ENCODE measurements at regions of chr6 and their contacts with region 1.

Region 1: GRCh38 chr6:24933868-24934401 is 1.8 kb downstream of the RIPOR2 start:
- DNase-seq: peak; percentile 63 to 74 (median 68)
- H3K4me3 ChIP-seq: peak overlapping the region; percentile 96 to 100
- H3K4me3 Mint-ChIP-seq: peak overlapping the region; percentile 96 to 100 (median 99)
- H3K27ac ChIP-seq: peak overlapping the region; percentile 78
- H3K27ac Mint-ChIP-seq: peak overlapping the region; percentile 87 to 96 (median 94)
- H3K4me1 ChIP-seq: peaks cover 55% of the 10 kb centered on the region
- H3K4me1 Mint-ChIP-seq: peaks cover 39 to 68% (median 51%) of the 10 kb centered on the region in 4 donors
- H3K27me3 ChIP-seq: no peaks in the 10 kb centered on the region
- H3K27me3 Mint-ChIP-seq: no peaks in the 10 kb centered on the region

Region 2: GRCh38 chr6:24720604-24721460 is 213.1 kb before region 1 on chr6:
- CTCF ChIA-PET with region 1: interaction called, 3 read pairs
- POLR2A ChIA-PET with region 1: no interaction called
- intact Hi-C with region 1: loop called (anchors 2 kb)
- DNase-seq: peak; percentile 100
- H3K4me3 ChIP-seq: peak overlapping the region; percentile 68 to 95
- H3K4me3 Mint-ChIP-seq: peak overlapping the region; percentile 91 to 100 (median 97)
- H3K27ac ChIP-seq: peak overlapping the region; percentile 100
- H3K27ac Mint-ChIP-seq: peak overlapping the region; percentile 90 to 100 (median 99)
- H3K4me1 ChIP-seq: peaks cover 38% of the 10 kb centered on the region
- H3K4me1 Mint-ChIP-seq: peaks cover 33 to 56% (median 40%) of the 10 kb centered on the region in 4 donors
- H3K27me3 ChIP-seq: no peaks in the 10 kb centered on the region
- H3K27me3 Mint-ChIP-seq: no peaks in the 10 kb centered on the region

Region 3: GRCh38 chr6:24891004-24891403 is 42.9 kb before region 1 on chr6:
- CTCF ChIA-PET with region 1: interaction called, 6 read pairs
- POLR2A ChIA-PET with region 1: interaction called, 14 read pairs
- intact Hi-C with region 1: no loop called
- DNase-seq: no peak
- H3K4me3 ChIP-seq: no peak overlapping the region
- H3K4me3 Mint-ChIP-seq: peak overlapping the region in 7 of 8 donors; percentile 17 to 66 (median 22)
- H3K27ac ChIP-seq: no peak overlapping the region
- H3K27ac Mint-ChIP-seq: peak overlapping the region; percentile 7 to 85 (median 77)
- H3K4me1 ChIP-seq: peaks cover 92% of the 10 kb centered on the region
- H3K4me1 Mint-ChIP-seq: peaks cover 72 to 94% (median 83%) of the 10 kb centered on the region in 4 donors
- H3K27me3 ChIP-seq: no peaks in the 10 kb centered on the region
- H3K27me3 Mint-ChIP-seq: no peaks in the 10 kb centered on the region

Region 4: GRCh38 chr6:24949020-24949569 is 15.2 kb after region 1 on chr6:
- CTCF ChIA-PET with region 1: interaction called, 333 read pairs
- POLR2A ChIA-PET with region 1: interaction called, 1,351 read pairs
- intact Hi-C with region 1: loop called (anchors 1 kb)
- DNase-seq: peak; percentile 70 to 86 (median 83)
- H3K4me3 ChIP-seq: peak overlapping the region; percentile 19 to 47
- H3K4me3 Mint-ChIP-seq: peak overlapping the region; percentile 57 to 90 (median 82)
- H3K27ac ChIP-seq: peak overlapping the region; percentile 51
- H3K27ac Mint-ChIP-seq: peak overlapping the region; percentile 84 to 97 (median 95)
- H3K4me1 ChIP-seq: peaks cover 79% of the 10 kb centered on the region
- H3K4me1 Mint-ChIP-seq: peaks cover 56 to 87% (median 72%) of the 10 kb centered on the region in 4 donors
- H3K27me3 ChIP-seq: no peaks in the 10 kb centered on the region
- H3K27me3 Mint-ChIP-seq: no peaks in the 10 kb centered on the region

Region 5: DNA sequence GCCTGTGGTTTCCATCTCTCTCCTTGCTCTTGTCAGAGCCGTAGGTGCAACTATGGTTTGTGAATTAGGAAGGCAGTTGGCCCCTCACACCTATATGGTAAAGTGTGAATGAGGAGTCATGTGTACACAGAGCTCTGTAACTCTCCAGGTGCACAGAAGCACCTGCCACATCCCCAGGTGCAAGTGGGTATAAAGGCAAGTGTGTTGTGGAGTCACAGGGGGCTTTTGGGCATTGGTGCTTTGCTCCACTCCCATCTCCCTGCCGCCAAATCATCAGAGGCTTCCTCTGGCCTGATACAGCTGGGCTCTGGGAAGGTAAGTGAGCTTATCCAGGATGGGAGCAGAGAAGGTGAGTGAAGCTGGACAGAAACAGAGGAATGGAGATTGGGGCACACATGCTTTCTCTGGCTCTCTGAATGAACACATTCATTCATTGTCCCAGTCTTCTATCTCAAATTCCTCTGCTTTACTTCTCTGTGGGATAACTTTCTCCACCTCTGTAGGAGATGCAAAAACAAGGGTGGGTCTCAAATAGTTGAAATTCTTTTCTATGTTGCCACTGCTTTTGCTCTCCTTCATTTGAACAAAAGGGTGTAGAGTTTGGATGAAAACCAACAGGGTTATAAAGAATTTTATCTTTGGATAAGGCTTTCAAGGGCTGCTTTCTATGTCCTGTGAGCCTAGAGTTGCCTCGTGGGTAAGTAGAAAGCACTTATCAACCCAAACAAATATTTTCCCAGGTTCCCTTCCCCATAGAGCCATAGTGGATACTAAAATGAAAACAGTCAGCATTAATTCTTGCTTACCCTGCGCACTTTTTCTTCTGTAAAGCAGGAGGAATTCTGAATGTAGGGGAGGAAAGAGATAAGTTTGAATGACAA is 46.8 kb after region 1 on chr6:
- CTCF ChIA-PET with region 1: interaction called, 153 read pairs
- POLR2A ChIA-PET with region 1: interaction called, 1,351 read pairs
- intact Hi-C with region 1: no loop called
- DNase-seq: peak in 1 of 5 donors; percentile 61
- H3K4me3 ChIP-seq: no peak overlapping the region
- H3K4me3 Mint-ChIP-seq: peak overlapping the region in 5 of 8 donors; percentile 1 to 55 (median 27)
- H3K27ac ChIP-seq: no peak overlapping the region
- H3K27ac Mint-ChIP-seq: peak overlapping the region; percentile 8 to 79 (median 68)
- H3K4me1 ChIP-seq: peaks cover 60% of the 10 kb centered on the region
- H3K4me1 Mint-ChIP-seq: peaks cover 50 to 83% (median 67%) of the 10 kb centered on the region in 4 donors
- H3K27me3 ChIP-seq: no peaks in the 10 kb centered on the region
- H3K27me3 Mint-ChIP-seq: no peaks in the 10 kb centered on the region

Region 6: DNA sequence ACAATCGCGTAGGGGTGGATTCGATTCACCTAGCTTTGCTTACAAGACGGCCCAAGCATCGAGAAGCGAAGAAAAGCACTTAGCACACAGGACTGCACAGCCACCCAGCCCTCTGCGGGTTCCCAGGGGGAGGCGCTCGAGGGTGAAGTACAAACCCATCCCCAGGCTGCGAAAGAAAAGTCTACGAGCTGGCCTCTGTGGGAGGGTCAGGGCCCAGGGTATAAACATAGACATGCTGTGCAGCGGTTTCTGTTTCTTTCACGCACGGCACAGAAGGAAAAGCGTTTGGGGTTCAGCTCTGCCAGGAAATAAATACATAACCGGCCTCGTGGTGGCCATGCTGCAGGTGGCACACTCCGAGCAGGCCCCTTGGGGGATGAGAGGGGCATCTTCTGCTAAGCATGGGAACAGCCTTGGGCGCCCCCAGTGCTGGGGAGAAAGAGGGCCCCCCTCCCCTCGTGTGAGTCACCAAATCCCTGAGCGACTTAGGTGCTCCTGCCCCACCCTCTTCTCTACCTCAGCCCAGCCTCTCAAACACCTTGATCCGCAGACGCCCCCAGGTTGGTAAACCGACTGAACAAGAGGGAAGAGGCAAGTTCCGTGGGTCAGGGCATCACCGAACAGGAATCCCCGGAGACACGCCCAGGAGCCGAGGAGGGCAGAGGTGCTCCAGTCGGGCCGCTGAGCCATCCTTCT is 93.4 kb after region 1 on chr6:
- CTCF ChIA-PET with region 1: interaction called, 38 read pairs
- POLR2A ChIA-PET with region 1: interaction called, 45 read pairs
- intact Hi-C with region 1: no loop called
- DNase-seq: peak; percentile 81 to 88 (median 86)
- H3K4me3 ChIP-seq: peak overlapping the region; percentile 43 to 54
- H3K4me3 Mint-ChIP-seq: peak overlapping the region; percentile 73 to 94 (median 82)
- H3K27ac ChIP-seq: peak overlapping the region; percentile 75
- H3K27ac Mint-ChIP-seq: peak overlapping the region; percentile 89 to 98 (median 93)
- H3K4me1 ChIP-seq: peaks cover 66% of the 10 kb centered on the region
- H3K4me1 Mint-ChIP-seq: peaks cover 53 to 71% (median 63%) of the 10 kb centered on the region in 4 donors
- H3K27me3 ChIP-seq: no peaks in the 10 kb centered on the region
- H3K27me3 Mint-ChIP-seq: no peaks in the 10 kb centered on the region